Activated T-helper 1 cell treated with anti-CD3 and anti-CD28 coated beads, Interleukin-12 subunit alpha, Interleukin-12 subunit beta, Interleukin-2, Interleukin-4 antibody, amounts not matched to agents 30 ng/mL and 10 ng/mL and 1 ng/mL, durations not matched to agents 14 hours and 24 hours and 36 hours (primary cell): ENCODE measurements at regions of chr7 and their contacts with region 1.

Region 1: DNA sequence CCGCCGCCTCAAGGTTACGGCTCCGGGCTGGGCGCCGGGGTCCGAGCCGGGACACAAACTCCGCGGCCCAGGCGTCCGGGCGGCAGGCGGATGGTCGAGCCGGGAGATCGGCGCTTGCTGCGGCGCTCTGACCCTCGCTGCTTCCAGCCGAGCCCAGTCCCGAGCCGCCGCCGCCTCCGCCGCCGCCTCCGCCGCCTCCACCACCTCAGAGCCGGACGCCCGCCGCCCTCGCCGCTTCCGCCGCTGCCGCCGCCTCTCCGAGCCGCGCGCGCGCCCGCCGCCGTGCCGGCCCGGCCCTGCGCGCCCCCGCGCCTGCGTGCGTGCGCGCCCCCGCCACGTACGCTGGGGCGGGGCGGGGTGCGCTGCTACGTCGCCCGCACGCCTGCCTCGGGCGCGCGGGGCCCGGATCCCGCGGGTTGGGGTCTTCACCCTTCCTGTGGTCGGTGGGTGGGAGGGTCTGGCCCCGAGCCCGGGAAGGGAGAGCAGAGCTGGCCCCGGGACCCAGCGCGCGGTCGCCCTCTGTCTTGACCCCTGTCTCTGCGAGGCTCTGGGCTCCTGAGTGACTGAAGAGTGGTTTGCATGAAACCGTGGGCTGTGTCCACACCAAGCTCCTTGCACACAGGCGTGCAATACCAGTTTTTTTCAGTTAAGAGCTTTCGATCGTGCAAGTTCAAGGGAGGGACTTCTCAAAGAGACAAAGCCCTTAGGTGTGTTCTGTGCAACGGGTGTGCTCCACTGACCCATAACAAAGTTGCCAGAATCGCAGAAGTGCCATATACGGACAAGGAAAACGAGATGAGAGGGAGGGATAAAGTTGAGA is at the start of gene SMURF1:
- DNase-seq: peak; percentile 77
- H3K4me3 Mint-ChIP-seq: peak within 1 kb of the TSS; percentile 92
- H3K27ac Mint-ChIP-seq: peak within 1 kb of the TSS; percentile 87
- H3K4me1 Mint-ChIP-seq: peaks cover 30% of the 10 kb centered on the region
- H3K27me3 Mint-ChIP-seq: peaks cover 4% of the 10 kb centered on the region
- total RNA-seq, gene SMURF1: 14.9 and 15.9 TPM in 2 replicates

Region 2: GRCh38 chr7:98400542-98401340 is 743.3 kb before region 1 on chr7 and contains the start of gene BAIAP2L1:
- intact Hi-C with region 1: loop called (anchors 5 kb)
- DNase-seq: peak; percentile 56
- H3K4me3 Mint-ChIP-seq: peak within 1 kb of the TSS; percentile 33
- H3K27ac Mint-ChIP-seq: peak within 1 kb of the TSS; percentile 31
- H3K4me1 Mint-ChIP-seq: peaks cover 9% of the 10 kb centered on the region
- H3K27me3 Mint-ChIP-seq: peaks cover 29% of the 10 kb centered on the region
- total RNA-seq, gene BAIAP2L1: 1.7 and 2.7 TPM in 2 replicates

Region 3: GRCh38 chr7:99040104-99040958 is 103.7 kb before region 1 on chr7:
- intact Hi-C with region 1: loop called (anchors 5 kb)
- DNase-seq: peak; percentile 38
- H3K4me3 Mint-ChIP-seq: no peak overlapping the region
- H3K27ac Mint-ChIP-seq: peak overlapping the region; percentile 58
- H3K4me1 Mint-ChIP-seq: peaks cover 4% of the 10 kb centered on the region
- H3K27me3 Mint-ChIP-seq: no peaks in the 10 kb centered on the region

Region 4: DNA sequence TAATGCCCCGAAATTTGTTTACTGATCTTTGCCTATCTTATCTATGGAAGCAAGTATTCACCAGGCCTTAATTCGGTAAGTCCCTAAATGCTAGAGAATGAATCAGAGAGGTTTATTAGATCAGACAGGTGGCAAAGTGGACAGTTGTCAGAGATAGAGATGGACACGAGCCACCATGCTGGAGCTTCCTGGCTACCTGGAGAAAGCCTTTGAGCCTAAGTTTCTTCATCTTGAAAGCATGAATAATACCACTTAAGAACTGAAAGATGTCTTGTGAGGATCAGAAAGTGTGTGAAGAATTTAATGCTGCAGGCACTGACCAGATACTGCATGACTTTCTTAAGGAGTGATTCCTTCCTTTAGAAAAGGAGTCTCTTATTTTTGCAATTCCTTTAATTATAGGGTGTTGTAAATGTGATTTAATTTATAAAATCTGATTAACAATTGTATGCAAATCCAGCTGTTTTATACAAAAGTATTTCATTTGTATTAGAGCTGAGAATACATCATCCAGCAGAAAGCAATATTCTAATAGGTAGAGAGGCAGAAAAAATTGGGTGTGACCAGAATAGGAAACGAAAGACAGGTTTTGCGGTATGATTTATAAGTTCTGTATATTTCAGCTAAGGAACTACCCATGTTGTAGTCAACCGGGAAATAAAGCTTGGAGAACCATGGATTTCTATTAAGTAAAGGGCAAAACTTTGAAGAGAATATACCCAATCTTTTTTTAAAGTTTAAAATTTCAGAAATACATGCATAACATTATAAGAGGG is 82.9 kb before region 1 on chr7:
- intact Hi-C with region 1: no loop called
- DNase-seq: no peak
- H3K4me3 Mint-ChIP-seq: no peak overlapping the region
- H3K27ac Mint-ChIP-seq: no peak overlapping the region
- H3K4me1 Mint-ChIP-seq: peaks cover 11% of the 10 kb centered on the region
- H3K27me3 Mint-ChIP-seq: no peaks in the 10 kb centered on the region

Region 5: GRCh38 chr7:99312316-99313203 is 168.5 kb after region 1 on chr7:
- intact Hi-C with region 1: loop called (anchors 2 kb)
- DNase-seq: peak; percentile 53
- H3K4me3 Mint-ChIP-seq: no peak overlapping the region
- H3K27ac Mint-ChIP-seq: no peak overlapping the region
- H3K4me1 Mint-ChIP-seq: peaks cover 21% of the 10 kb centered on the region
- H3K27me3 Mint-ChIP-seq: peaks cover 21% of the 10 kb centered on the region

Region 6: GRCh38 chr7:99374103-99375064 is 230.3 kb after region 1 on chr7 and contains the start of gene ARPC1B:
- intact Hi-C with region 1: loop called (anchors 5 kb)
- DNase-seq: peak; percentile 77
- H3K4me3 Mint-ChIP-seq: peak within 1 kb of the TSS; percentile 86
- H3K27ac Mint-ChIP-seq: peak within 1 kb of the TSS; percentile 72
- H3K4me1 Mint-ChIP-seq: peaks cover 15% of the 10 kb centered on the region
- H3K27me3 Mint-ChIP-seq: no peaks in the 10 kb centered on the region
- total RNA-seq, gene ARPC1B: 254 and 256 TPM in 2 replicates

Region 7: DNA sequence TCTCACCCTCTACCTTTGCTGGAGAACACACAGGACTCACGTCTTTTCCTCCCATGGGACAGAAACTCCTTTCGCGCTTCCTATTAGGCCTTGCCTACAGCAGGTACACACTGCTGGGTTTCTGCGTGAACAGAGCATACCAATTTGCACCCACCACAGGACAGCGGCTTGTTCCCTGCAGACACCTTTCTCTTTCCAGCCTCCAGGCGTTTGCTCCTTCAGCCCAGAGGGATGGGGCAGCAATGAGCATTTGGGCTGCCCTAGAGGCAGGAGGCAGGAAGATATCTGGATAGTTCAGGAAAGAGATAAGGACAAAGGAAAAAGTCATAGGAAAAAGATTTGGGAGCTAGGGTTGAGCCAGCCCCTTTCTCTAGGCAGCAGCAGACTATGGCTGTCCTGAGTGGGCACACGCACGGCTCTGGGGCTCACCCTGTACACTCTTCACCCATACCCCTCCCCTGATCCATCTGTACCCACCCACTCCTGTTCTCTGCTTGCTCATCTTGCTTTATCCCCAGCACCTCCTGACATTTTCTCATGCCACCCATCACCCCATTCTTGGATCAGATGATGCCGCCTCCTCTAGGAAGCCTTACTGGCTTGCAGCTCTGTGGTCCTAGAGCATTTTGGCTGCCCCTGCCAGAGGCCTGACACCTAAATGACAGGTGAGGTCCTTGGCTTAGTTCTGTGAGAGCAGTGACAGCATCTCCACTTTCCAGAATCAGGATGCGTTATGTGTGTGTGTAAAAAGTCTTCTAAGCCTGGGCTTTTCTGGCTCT is 1122.7 kb after region 1 on chr7:
- intact Hi-C with region 1: no loop called
- DNase-seq: no peak
- H3K4me3 Mint-ChIP-seq: no peak overlapping the region
- H3K27ac Mint-ChIP-seq: no peak overlapping the region
- H3K4me1 Mint-ChIP-seq: peaks cover 20% of the 10 kb centered on the region
- H3K27me3 Mint-ChIP-seq: peaks cover 2% of the 10 kb centered on the region